ENCODE measurements at regions of chr4 and their contacts with region 1.

Region 1: DNA sequence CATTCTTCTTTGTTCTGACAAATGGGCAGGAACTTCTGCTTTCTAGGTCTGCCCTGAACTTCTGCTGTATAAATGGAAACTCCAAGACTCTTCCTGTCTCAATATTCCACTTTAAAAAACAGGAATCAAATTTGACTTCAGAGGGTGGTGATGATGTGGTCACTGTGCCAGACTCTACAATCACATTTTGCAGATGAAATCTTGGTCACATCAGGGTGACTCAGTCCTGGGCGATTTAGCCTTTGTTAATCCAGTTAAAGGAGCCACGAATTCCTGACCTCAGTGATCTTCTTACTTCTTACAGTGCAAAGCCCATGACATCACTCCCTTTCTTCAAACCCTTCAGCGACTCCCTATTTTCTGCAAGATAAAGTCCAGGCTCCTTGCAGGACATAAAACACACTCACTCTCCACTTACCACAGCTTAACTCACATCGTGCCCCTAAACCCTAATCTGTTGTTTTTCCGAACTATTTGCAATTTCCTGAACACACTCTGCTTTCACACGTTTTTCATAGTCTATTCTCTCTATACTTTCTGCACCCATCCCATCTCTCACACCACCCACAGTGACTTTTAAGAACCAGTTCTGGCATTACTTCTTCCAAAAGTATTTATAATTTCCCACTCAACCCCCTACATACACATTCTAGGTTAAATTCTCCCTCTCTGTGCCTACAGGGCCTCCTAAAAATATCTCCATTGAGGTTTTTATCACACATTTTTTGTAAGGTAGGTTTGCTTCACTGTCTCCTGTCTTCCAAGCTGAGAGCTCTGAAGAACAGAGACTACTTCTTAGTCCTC is 11.1 kb downstream of the GASK1B start:
- DNase-seq: peak; percentile 81 to 98 (median 89)
- H3K4me3 ChIP-seq: peak overlapping the region in 1 of 3 experiments; percentile 51
- H3K4me3 Mint-ChIP-seq: peak overlapping the region in 1 of 2 donors; percentile 68
- H3K27ac ChIP-seq: peak overlapping the region in 1 of 2 donors; percentile 80
- H3K27ac Mint-ChIP-seq: peak overlapping the region; percentile 71 to 93 (median 84)
- H3K4me1 ChIP-seq: peaks cover 63 to 75% of the 10 kb centered on the region in 2 donors
- H3K4me1 Mint-ChIP-seq: peaks cover 80% of the 10 kb centered on the region
- H3K27me3 ChIP-seq: no peaks in the 10 kb centered on the region
- H3K27me3 Mint-ChIP-seq: no peaks in the 10 kb centered on the region
- CTCF ChIP-seq: no peak

Region 2: DNA sequence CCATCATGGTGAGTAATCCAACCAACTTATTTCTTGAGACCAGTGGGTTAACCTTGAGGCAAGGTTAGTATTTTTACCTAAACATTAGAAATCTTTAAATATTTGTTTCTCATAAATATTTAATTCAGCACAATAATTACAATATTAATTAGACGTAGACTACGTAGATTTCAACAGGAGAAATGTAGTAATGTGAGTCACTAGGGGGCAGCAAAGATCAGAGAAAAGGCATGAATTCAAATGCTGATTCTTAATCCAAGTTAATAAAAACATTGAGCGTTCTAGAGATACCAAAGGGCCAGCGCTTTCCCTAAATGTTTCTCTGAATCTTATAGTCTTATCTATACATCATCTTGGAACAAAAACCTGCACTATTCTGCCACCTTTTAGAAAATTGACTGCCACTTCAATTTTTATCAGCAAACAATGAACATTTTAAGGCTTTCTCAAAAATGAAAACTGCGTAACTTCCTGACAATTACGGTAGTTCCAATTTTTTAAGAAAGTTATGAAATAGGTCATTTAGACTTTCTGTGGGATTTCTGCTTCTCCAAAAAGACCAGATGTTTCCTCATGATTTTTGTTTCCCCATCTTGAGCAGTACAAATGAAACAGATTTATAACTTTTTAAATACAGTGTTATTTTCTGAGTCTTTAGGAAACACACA is 169.6 kb before region 1 on chr4:
- intact Hi-C with region 1: loop called in 1 of 2 experiments (anchors 10 kb)
- DNase-seq: peak; percentile 71 to 84 (median 78)
- H3K4me3 ChIP-seq: peak overlapping the region; percentile 48 to 94 (median 76)
- H3K4me3 Mint-ChIP-seq: peak overlapping the region; percentile 69 to 79
- H3K27ac ChIP-seq: peak overlapping the region in 1 of 2 donors; percentile 85
- H3K27ac Mint-ChIP-seq: peak overlapping the region; percentile 80 to 92 (median 89)
- H3K4me1 ChIP-seq: peaks cover 34 to 49% of the 10 kb centered on the region in 2 donors
- H3K4me1 Mint-ChIP-seq: peaks cover 46% of the 10 kb centered on the region
- H3K27me3 ChIP-seq: no peaks in the 10 kb centered on the region
- H3K27me3 Mint-ChIP-seq: no peaks in the 10 kb centered on the region
- CTCF ChIP-seq: peak; percentile 86

Region 3: DNA sequence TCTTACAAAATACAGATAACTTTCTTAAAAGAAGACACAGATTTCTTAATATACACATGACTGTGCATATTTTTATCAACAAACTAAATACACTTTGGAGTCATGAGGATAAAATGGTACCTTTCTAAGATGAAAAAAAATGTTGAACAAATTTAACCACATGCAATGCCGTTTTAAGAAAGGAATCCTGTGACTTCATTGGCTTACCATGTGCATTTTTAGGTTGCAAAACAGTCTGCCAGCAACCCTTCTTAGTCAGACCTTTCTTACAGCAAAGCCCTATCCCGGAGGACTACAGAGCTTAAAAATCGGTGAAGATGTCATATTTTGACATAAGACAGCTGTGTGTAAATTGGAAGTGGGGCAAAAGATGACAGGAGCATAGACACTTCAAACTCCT is 40.6 kb before region 1 on chr4:
- intact Hi-C with region 1: no loop called
- DNase-seq: peak; percentile 43 to 73 (median 64)
- H3K4me3 ChIP-seq: peak overlapping the region in 1 of 3 experiments; percentile 37
- H3K4me3 Mint-ChIP-seq: peak overlapping the region in 1 of 2 donors; percentile 72
- H3K27ac ChIP-seq: peak overlapping the region in 1 of 2 donors; percentile 73
- H3K27ac Mint-ChIP-seq: peak overlapping the region; percentile 72 to 89 (median 74)
- H3K4me1 ChIP-seq: peaks cover 25 to 26% of the 10 kb centered on the region in 2 donors
- H3K4me1 Mint-ChIP-seq: peaks cover 38% of the 10 kb centered on the region
- H3K27me3 ChIP-seq: no peaks in the 10 kb centered on the region
- H3K27me3 Mint-ChIP-seq: no peaks in the 10 kb centered on the region
- CTCF ChIP-seq: no peak

Measured in CD14-positive monocyte (primary cell).